ENCODE measurements at regions of chr1 and their contacts with region 1.

Region 1: GRCh38 chr1:28648474-28649198 is at the start of gene RNU11:
- DNase-seq: peak; percentile 93
- ATAC-seq: peak; percentile 83
- H3K4me3 Mint-ChIP-seq: peak within 1 kb of the TSS; percentile 83
- H3K27ac Mint-ChIP-seq: peak within 1 kb of the TSS; percentile 100
- H3K4me1 Mint-ChIP-seq: peaks cover 34% of the 10 kb centered on the region
- H3K27me3 Mint-ChIP-seq: no peaks in the 10 kb centered on the region
- total RNA-seq, gene RNU11: not detected

Region 2: DNA sequence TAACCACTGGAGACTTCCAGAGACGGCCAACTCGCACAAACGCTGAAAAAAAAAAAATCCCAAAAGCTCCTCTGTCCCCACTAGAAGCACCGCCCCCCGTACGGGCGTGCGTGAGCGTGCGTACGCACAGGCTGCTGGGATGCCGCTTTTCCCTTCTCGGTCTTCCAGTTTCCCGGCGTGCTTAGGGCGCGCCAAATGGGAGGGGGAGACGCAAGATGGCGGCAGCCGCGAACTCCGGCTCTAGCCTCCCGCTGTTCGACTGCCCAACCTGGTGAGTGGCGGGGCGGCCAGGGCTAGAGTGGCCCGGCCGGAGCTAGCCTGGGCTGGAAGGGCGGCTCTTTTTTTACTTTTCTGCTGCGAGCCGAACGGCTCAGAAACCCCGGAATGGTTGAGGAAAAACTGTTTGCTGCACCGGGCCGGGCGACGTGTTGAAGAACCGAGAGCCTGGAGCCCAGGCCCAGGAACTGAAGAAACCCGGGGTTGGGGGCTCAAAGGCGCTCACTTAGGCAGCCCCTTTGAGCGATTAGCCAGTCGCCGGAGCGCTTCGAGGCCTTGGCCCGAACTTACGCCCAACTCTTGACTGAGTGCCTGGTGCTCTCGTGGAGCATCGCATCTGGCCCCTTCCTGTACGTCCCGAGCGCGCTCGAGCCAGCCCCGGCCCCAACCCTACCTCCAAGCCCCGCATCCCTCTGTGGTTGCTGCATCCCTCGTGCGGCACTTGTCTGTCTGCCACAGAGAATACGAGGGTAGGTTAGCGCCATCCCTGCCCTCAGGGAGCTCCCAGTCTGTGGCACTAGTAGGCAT is 817.8 kb before region 1 on chr1 and contains the start of gene PPP1R8:
- CTCF ChIA-PET with region 1: no interaction called
- POLR2A ChIA-PET with region 1: interaction called, 6 read pairs
- intact Hi-C with region 1: loop called in 1 of 2 experiments (anchors 5 kb)
- DNase-seq: peak; percentile 94
- ATAC-seq: peak; percentile 99
- H3K4me3 Mint-ChIP-seq: peak within 1 kb of the TSS; percentile 94
- H3K27ac Mint-ChIP-seq: peak within 1 kb of the TSS; percentile 94
- H3K4me1 Mint-ChIP-seq: peaks cover 40% of the 10 kb centered on the region
- H3K27me3 Mint-ChIP-seq: no peaks in the 10 kb centered on the region
- total RNA-seq, gene PPP1R8: 49.6 to 65.9 TPM

Region 3: GRCh38 chr1:28329395-28330153 is 319.1 kb before region 1 on chr1:
- CTCF ChIA-PET with region 1: no interaction called
- POLR2A ChIA-PET with region 1: interaction called, 18 read pairs
- intact Hi-C with region 1: loop called in 1 of 2 experiments (anchors 1 kb)
- DNase-seq: peak; percentile 61
- ATAC-seq: peak; percentile 19
- H3K4me3 Mint-ChIP-seq: peak overlapping the region; percentile 96
- H3K27ac Mint-ChIP-seq: peak overlapping the region; percentile 97
- H3K4me1 Mint-ChIP-seq: peaks cover 39% of the 10 kb centered on the region
- H3K27me3 Mint-ChIP-seq: no peaks in the 10 kb centered on the region

Region 4: GRCh38 chr1:28417429-28417922 is 231.2 kb before region 1 on chr1:
- CTCF ChIA-PET with region 1: no interaction called
- POLR2A ChIA-PET with region 1: no interaction called
- intact Hi-C with region 1: no loop called
- DNase-seq: peak; percentile 42
- ATAC-seq: peak; percentile 92
- H3K4me3 Mint-ChIP-seq: no peak overlapping the region
- H3K27ac Mint-ChIP-seq: peak overlapping the region; percentile 60
- H3K4me1 Mint-ChIP-seq: peaks cover 16% of the 10 kb centered on the region
- H3K27me3 Mint-ChIP-seq: no peaks in the 10 kb centered on the region

Region 5: GRCh38 chr1:28510665-28511440 is 137.8 kb before region 1 on chr1:
- CTCF ChIA-PET with region 1: interaction called, 3 read pairs
- POLR2A ChIA-PET with region 1: interaction called, 22 read pairs
- intact Hi-C with region 1: loop called in 1 of 2 experiments (anchors 1 kb)
- DNase-seq: peak; percentile 34
- ATAC-seq: peak; percentile 16
- H3K4me3 Mint-ChIP-seq: peak overlapping the region; percentile 98
- H3K27ac Mint-ChIP-seq: peak overlapping the region; percentile 99
- H3K4me1 Mint-ChIP-seq: peaks cover 33% of the 10 kb centered on the region
- H3K27me3 Mint-ChIP-seq: peaks cover 1% of the 10 kb centered on the region

Region 6: DNA sequence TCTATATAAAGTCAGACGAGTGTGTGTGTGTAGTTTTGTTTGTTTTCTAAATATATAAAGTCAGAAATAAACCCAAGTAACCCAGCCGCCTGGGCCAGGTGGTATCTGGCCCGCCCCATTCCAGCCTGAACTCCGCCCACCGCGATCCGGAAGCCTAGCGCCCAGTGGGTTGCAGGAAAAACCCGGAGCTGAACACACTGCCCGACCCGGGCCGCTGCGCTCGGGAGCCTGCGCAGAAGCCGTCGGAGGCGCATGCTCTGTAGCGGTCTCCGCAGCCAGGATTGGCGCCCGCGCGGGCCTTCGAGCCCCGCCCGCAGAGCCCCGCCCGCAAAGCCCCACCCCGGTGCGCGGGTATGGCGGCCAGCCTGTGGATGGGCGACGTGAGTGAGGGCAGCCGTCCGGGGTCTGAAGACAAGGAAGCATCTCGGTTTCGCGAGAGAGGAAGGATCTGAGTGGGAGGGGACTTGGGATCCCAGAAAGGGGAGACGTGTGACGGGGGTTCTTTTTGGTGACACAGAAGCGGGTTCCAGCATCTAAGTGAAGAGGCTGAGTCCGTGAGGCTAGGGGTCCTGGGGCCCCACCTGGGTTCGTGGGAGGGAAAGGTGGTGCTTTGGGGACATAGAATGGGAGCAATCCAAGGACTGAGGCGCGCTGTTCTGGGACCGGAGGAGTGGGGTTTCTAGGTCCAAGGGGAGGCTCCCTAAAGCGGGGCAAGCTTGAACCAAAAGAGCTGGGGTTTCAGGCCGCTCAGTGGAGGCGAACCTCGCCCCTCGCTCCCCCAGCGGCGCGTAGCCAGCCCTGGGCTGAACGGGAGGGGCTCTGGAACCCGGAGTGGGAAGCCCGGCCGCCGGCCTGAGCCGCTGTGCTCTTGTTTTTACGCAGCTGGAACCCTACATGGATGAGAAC is 95.6 kb before region 1 on chr1 and contains the start of gene TRNAU1AP:
- CTCF ChIA-PET with region 1: no interaction called
- POLR2A ChIA-PET with region 1: interaction called, 8 read pairs
- intact Hi-C with region 1: loop called in 1 of 2 experiments (anchors 1 kb)
- DNase-seq: peak; percentile 99
- ATAC-seq: peak; percentile 94
- H3K4me3 Mint-ChIP-seq: peak within 1 kb of the TSS; percentile 92
- H3K27ac Mint-ChIP-seq: peak within 1 kb of the TSS; percentile 95
- H3K4me1 Mint-ChIP-seq: peaks cover 24% of the 10 kb centered on the region
- H3K27me3 Mint-ChIP-seq: no peaks in the 10 kb centered on the region
- total RNA-seq, gene TRNAU1AP: 50.7 to 60.2 TPM

Region 7: DNA sequence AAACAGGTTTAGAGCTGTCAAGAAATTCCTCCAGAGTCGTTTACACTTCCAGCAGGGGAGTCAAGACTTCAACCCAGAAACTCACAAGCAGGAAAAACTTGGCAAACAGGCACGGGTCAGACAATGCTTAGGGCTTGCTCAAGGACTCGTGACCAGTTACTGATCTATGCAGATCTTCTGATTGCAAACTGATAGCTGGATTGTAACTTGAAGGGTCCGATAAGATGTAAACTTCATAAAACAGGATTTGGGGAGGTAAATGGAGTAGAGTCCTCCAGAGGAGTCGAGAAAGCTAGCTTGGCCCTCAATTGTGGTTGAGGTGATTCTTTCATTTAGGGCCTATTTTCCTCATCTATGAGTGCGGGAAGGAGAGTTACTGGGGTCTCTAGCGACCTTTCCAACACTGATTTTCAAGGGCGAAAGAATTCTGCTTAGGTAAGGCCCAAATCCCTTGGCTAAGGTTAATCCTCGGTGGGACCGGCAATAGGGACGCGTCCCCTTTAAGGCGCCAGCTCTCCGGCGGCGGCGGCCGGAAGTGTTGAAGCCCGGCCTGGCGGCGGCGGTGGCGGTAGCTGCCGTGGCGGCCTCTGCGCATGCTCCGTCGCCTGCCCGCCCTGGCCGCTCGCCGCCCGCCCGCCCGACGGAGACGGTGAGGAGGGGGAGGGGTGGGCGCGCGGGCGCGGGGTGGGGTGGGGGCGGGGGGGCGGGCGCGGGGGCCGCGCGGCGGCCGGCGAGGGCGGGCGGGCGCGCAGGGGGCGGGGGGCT is 19.7 kb after region 1 on chr1 and contains the start of gene GMEB1:
- CTCF ChIA-PET with region 1: interaction called, 3 read pairs
- POLR2A ChIA-PET with region 1: interaction called, 96 read pairs
- intact Hi-C with region 1: loop called (anchors 1 kb)
- DNase-seq: peak; percentile 93
- ATAC-seq: peak; percentile 72
- H3K4me3 Mint-ChIP-seq: peak within 1 kb of the TSS; percentile 84
- H3K27ac Mint-ChIP-seq: peak within 1 kb of the TSS; percentile 99
- H3K4me1 Mint-ChIP-seq: peaks cover 11% of the 10 kb centered on the region
- H3K27me3 Mint-ChIP-seq: no peaks in the 10 kb centered on the region
- total RNA-seq, gene GMEB1: 20.3 to 25.4 TPM

Measured in activated CD4-positive, alpha-beta T cell treated with anti-CD3 and anti-CD28 coated beads for 36 hours (primary cell).